ENCODE measurements at regions of chr21 and their contacts with region 1.

Region 1: DNA sequence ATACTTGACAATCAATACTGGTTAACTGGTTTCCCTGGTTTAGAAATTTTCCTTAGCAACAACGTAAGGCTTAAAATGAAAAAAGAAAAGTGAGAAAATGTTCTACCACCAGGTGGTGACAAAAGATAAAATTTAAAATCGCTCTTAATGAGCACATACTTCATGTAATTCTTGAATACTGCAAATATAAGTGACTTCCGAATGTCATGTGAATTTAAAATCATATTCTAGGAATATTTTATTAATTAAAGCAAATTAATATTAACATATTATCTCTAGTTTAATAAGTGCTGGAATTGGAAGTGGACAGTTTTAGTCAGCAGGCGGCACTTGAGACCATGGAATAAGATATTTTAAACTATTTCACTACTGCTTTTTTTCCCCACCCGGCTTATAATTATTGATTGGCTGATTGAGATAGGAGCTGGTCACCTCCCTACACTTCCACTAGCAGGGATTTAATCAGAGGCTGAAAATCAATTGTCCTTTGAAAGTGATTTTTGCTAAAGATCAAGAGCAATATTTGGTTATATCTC is 5.0 kb upstream of the ADAMTS1 start:
- DNase-seq: no peak
- H3K4me3 ChIP-seq: peak overlapping the region in 1 of 2 donors; percentile 29
- H3K27ac ChIP-seq: no peak overlapping the region
- H3K4me1 ChIP-seq: peaks cover 0 to 3% of the 10 kb centered on the region in 2 donors
- H3K27me3 ChIP-seq: no peaks in the 10 kb centered on the region
- CTCF ChIP-seq: peak; percentile 61 to 76 (median 64)

Region 2: DNA sequence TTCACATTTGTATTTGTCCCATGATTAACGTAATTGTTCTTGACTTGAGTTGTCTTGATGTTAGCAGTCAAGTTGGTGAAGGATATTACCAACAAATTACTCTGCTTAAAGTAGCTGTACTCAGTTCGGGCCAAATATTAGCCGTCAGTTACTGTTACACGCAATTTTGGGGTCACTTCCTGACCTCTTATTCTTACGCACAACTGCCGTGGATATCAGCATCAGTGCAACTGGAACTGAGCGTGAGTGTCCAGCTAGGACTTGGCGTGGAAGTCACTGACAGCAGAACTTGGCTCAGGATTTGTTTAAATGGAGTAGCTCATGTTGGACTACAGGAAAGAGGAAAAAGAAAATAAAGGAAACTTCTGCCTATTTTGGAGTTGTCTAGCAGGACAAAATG is 61.4 kb before region 1 on chr21:
- intact Hi-C with region 1: no loop called
- DNase-seq: peak in 1 of 2 donors; percentile 89
- H3K4me3 ChIP-seq: no peak overlapping the region
- H3K27ac ChIP-seq: peak overlapping the region; percentile 74 to 76
- H3K4me1 ChIP-seq: peaks cover 8 to 18% of the 10 kb centered on the region in 2 donors
- H3K27me3 ChIP-seq: no peaks in the 10 kb centered on the region
- CTCF ChIP-seq: no peak

Region 3: GRCh38 chr21:27476696-27477095 is 626.5 kb after region 1 on chr21:
- intact Hi-C with region 1: loop called (anchors 5 kb)
- DNase-seq: no peak
- H3K4me3 ChIP-seq: no peak overlapping the region
- H3K27ac ChIP-seq: no peak overlapping the region
- H3K4me1 ChIP-seq: no peaks in the 10 kb centered on the region
- H3K27me3 ChIP-seq: no peaks in the 10 kb centered on the region
- CTCF ChIP-seq: peak; percentile 18 to 56 (median 43)

Region 4: DNA sequence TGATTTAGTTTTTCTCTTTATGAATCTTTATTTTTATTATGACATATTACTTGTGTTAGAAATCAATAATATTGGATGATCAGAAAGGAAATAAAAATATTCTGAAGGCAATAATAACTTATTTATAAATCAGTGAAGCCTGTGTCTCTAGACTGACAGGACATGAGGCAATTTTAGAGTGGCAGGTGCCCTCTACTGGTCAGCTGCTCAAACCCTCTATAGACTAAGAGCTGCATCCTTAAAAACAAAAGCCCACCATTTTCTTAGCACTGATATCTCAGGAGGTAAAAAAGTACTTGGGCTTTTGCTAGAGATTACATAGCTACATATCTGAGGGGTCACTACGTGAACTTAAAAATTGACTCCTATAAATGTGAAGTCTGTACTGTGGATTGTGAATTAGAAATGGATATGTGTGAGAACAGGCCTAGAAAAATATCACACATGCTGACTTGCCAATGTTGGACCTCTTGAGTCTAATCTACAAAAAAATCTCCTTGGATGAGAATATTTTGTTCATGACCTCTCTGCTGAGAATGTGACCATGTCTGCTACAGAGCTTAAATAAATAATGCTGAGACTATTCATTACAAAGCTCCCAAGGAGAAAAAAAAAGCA is 714.6 kb after region 1 on chr21:
- intact Hi-C with region 1: loop called (anchors 2 kb)
- DNase-seq: no peak
- H3K4me3 ChIP-seq: no peak overlapping the region
- H3K27ac ChIP-seq: no peak overlapping the region
- H3K4me1 ChIP-seq: peaks cover 0 to 10% of the 10 kb centered on the region in 2 donors
- H3K27me3 ChIP-seq: no peaks in the 10 kb centered on the region
- CTCF ChIP-seq: peak in 2 of 3 experiments; percentile 50 to 53